GM18951 (cell line): ENCODE measurements at regions of chr6 and their contacts with region 1.

Region 1: GRCh38 chr6:12890171-12890790 is 173.7 kb downstream of the PHACTR1 start:
- POLR2A ChIP-seq: no peak

Region 2: DNA sequence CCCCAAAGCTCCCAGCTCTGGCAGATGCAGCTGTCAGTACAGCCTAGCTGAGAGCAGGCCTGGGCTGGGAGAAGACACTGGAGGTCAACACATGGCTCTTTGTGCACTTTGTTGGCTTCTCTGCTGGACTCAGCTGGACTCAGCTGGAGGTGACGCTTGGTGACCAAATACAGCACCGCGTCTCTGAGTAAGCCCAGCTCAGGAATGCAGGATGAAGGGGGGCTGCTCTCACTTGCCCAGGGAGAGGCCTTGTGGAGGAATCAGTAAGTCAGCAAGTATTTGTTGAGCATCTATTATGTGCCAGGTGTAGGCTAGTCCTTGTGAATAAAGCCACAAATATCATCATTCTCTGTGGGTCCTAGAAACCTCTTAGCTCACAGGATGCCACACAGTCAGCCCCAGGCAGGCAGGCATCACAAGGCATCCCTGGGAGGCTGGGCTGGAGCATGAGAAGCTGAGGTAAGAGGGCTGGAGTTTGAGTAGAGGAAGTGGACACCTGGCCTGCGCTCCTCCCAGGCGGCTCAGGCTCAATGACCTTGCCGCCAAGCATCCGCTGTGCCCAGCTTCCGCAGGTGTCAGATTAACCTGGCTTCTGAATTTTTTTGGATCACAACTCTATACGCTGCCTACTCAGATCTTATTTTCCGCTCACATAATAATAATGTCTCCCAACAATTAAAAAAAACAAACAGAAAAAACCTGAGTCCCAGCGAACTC is 1257.3 kb before region 1 on chr6:
- in situ Hi-C with region 1: loop called (anchors 25 kb)
- POLR2A ChIP-seq: no peak

Region 3: GRCh38 chr6:12313992-12314805 is 576.1 kb before region 1 on chr6:
- in situ Hi-C with region 1: loop called (anchors 25 kb)
- POLR2A ChIP-seq: no peak